Transverse colon (tissue), 4 donors: ENCODE measurements at regions of chr2 and their contacts with region 1.

Region 1: DNA sequence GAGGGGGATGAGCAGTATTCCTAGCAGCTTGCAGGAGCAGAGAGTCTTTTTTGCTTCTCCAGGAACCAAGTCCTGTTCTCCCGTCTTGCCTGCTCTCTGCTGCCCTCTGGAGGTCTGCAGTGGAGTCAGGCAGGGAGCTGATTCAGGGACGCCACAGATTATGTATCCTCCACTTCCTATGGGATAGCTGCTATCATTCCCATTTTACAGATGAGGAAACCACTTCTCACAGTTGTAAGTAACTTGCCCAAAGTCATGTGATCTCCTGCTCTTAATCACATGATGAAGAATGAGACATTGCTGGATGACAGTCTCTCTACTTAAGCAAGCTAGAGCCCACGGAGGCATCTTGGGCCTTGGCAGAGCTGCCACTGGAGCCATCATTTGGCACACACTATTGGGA is 8.3 kb downstream of the SLC4A5 start:
- DNase-seq: peak; percentile 86
- H3K4me3 ChIP-seq: no peak overlapping the region
- H3K27ac ChIP-seq: no peak overlapping the region
- H3K4me1 ChIP-seq: no peaks in the 10 kb centered on the region
- H3K27me3 ChIP-seq: no peaks in the 10 kb centered on the region
- CTCF ChIP-seq: peak; percentile 80 to 98 (median 93)
- EP300 ChIP-seq: no peak
- POLR2A ChIP-seq: no peak

Region 2: DNA sequence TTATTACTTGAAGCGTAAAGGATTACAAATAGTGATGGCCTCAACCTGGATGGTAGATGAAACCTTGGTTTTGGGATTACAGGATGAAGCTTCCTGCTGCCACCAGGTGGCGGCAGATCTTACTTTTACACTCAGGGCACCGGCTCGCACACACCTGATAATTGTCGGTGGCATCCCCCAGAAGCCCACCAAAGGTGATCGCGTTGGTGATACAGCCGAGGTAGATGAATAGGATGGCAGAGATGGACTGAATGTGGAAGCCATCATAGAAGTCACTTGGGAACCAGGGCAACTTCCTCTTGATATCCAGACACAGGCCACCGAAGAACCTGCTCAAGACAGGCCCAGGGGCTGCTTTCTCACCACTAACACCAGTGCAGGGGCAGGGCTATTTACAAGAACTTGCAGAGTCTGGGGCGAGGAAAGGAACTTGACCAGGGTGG is 84.7 kb before region 1 on chr2:
- in situ Hi-C with region 1: loop called in 1 of 4 experiments (anchors 10 kb)
- intact Hi-C with region 1: no loop called
- DNase-seq: peak; percentile 53
- H3K4me3 ChIP-seq: no peak overlapping the region
- H3K27ac ChIP-seq: no peak overlapping the region
- H3K4me1 ChIP-seq: no peaks in the 10 kb centered on the region
- H3K27me3 ChIP-seq: no peaks in the 10 kb centered on the region
- CTCF ChIP-seq: peak; percentile 78 to 80 (median 80)
- EP300 ChIP-seq: no peak
- POLR2A ChIP-seq: no peak

Region 3: GRCh38 chr2:74261204-74261864 is 73.6 kb before region 1 on chr2:
- in situ Hi-C with region 1: loop called in 2 of 4 experiments (anchors 10 kb)
- intact Hi-C with region 1: no loop called
- DNase-seq: peak; percentile 50
- H3K4me3 ChIP-seq: no peak overlapping the region
- H3K27ac ChIP-seq: no peak overlapping the region
- H3K4me1 ChIP-seq: peaks cover 0 to 3% (median 0%) of the 10 kb centered on the region in 4 donors
- H3K27me3 ChIP-seq: no peaks in the 10 kb centered on the region
- CTCF ChIP-seq: peak in 4 of 5 experiments; percentile 13 to 35 (median 23)
- EP300 ChIP-seq: no peak
- POLR2A ChIP-seq: no peak

Region 4: GRCh38 chr2:74958274-74959105 is 623.6 kb after region 1 on chr2 and contains the start of gene POLE4:
- in situ Hi-C with region 1: no loop called
- intact Hi-C with region 1: no loop called
- DNase-seq: peak; percentile 96
- H3K4me3 ChIP-seq: peak within 1 kb of the TSS; percentile 53 to 73 (median 59)
- H3K27ac ChIP-seq: peak within 1 kb of the TSS; percentile 90 to 95 (median 92)
- H3K4me1 ChIP-seq: peaks cover 3 to 18% (median 11%) of the 10 kb centered on the region in 4 donors
- H3K27me3 ChIP-seq: no peaks in the 10 kb centered on the region
- CTCF ChIP-seq: no peak
- EP300 ChIP-seq: no peak
- POLR2A ChIP-seq: peak; percentile 87
- total RNA-seq, gene POLE4: 27.5 to 339 (median 46.0) TPM